CD14-positive monocyte (primary cell): ENCODE measurements at regions of chr6 and their contacts with region 1.

Region 1: GRCh38 chr6:6811151-6812002 is 222.9 kb downstream of the LY86 start:
- DNase-seq: peak; percentile 41 to 63 (median 61)
- H3K4me3 ChIP-seq: peak overlapping the region; percentile 50 to 82 (median 75)
- H3K4me3 Mint-ChIP-seq: peak overlapping the region; percentile 83 to 94
- H3K27ac ChIP-seq: peak overlapping the region; percentile 53 to 91
- H3K27ac Mint-ChIP-seq: peak overlapping the region; percentile 91 to 98 (median 93)
- H3K4me1 ChIP-seq: peaks cover 62 to 75% of the 10 kb centered on the region in 2 donors
- H3K4me1 Mint-ChIP-seq: peaks cover 75% of the 10 kb centered on the region
- H3K27me3 ChIP-seq: no peaks in the 10 kb centered on the region
- H3K27me3 Mint-ChIP-seq: peaks cover 0 to 2% (median 1%) of the 10 kb centered on the region in 3 donors
- CTCF ChIP-seq: no peak

Region 2: DNA sequence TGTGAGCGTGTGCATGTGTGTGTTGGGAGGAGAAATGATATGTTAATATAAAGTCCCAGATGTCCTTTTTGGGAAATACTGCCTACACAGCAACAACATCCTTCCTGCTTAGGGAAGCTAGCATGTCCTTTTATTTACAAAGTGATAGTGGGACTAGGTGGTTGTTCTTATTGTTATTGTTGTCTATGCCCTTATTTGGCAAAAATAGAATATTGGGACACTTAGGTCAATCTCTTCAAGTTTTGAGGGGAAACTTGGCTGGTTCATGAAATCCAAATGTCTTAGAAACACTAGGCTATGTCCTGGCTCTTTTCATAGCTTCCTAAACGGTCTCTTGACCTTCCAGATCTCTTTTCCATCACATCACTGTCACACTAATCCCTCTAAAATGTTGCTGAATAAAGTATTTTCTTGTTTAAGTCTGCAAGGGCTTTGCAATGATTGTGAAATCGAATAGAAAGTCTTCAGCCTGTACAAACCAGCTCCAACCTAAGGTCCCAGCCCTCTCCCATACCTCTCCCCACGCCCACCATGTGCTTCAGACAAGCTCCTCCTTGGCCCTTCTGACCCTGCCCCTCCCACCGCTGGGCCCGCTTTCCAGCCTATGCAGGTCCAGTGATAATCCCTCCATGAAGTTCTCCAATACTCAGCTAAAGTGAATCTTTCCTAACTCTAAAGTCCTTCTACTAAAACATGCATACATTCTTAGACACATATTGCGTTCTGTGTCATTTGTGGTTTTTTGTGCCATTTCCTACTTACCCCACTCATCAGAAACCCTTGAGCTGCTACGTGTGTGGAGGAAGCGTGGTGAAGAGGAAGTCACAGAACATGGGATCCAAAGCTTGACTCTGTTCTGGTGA is 17.8 kb before region 1 on chr6:
- intact Hi-C with region 1: loop called in 1 of 2 experiments (anchors 2 kb)
- DNase-seq: peak; percentile 79 to 93 (median 90)
- H3K4me3 ChIP-seq: peak overlapping the region in 1 of 3 experiments; percentile 29
- H3K4me3 Mint-ChIP-seq: peak overlapping the region; percentile 53 to 74
- H3K27ac ChIP-seq: peak overlapping the region; percentile 50 to 75
- H3K27ac Mint-ChIP-seq: peak overlapping the region; percentile 84 to 99 (median 96)
- H3K4me1 ChIP-seq: peaks cover 60% of the 10 kb centered on the region in 2 donors
- H3K4me1 Mint-ChIP-seq: peaks cover 62% of the 10 kb centered on the region
- H3K27me3 ChIP-seq: no peaks in the 10 kb centered on the region
- H3K27me3 Mint-ChIP-seq: peaks cover 0 to 5% (median 3%) of the 10 kb centered on the region in 3 donors
- CTCF ChIP-seq: no peak

Region 3: DNA sequence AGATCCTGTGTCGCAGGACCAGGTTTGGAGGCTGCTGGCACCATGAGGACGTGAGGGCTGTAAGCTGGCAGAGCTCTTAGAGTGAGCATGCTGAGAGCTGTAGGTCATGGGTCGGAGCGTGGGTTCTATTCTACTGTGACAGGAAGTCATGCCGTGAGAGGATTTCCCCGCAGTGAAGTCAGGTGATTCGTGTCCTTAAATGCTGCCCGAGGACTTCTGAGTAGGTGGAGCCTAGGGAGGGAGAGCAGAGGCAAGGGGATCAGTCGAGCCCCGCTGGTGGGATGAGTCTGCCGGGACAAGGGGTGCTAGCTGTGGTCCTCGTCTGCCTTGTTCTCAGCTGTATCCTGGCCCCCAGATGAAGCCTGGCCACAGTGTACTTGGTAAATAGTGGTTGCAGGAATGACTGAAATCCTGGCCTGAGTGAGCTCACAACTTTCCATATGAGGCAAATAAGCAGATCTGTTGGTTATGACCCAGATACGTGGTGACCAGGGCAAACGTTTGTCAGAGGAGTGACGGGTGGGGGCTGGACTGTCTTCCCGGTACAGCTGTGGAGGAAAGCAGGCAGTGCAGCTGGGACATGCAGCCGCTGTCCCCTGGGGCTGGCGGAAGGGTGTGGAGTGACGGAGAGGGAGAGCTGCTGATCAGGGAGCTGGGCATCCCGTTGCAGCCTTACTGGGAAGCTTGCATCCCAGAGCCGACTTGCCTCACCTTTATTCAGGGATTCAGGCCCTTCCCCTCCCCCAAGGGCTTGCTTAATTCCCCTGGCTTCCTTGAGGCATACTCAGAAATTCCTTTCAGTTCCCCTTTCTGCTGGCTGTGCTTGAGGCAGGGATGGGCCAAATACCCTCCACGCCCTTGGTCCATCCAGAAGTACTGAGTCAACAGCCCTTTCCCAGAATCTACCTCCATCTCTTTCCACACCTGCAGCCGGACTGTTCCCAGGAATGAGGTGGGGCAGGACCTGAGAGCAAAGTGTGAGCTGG is 45.5 kb after region 1 on chr6:
- intact Hi-C with region 1: loop called (anchors 5 kb)
- DNase-seq: peak; percentile 75 to 92 (median 86)
- H3K4me3 ChIP-seq: peak overlapping the region in 2 of 3 experiments; percentile 8 to 58
- H3K4me3 Mint-ChIP-seq: peak overlapping the region; percentile 40 to 72
- H3K27ac ChIP-seq: peak overlapping the region; percentile 67 to 93
- H3K27ac Mint-ChIP-seq: peak overlapping the region; percentile 93 to 98 (median 97)
- H3K4me1 ChIP-seq: peaks cover 42 to 45% of the 10 kb centered on the region in 2 donors
- H3K4me1 Mint-ChIP-seq: peaks cover 59% of the 10 kb centered on the region
- H3K27me3 ChIP-seq: no peaks in the 10 kb centered on the region
- H3K27me3 Mint-ChIP-seq: peaks cover 1 to 2% (median 2%) of the 10 kb centered on the region in 3 donors
- CTCF ChIP-seq: no peak

Region 4: GRCh38 chr6:6890400-6890858 is 79.1 kb after region 1 on chr6:
- intact Hi-C with region 1: loop called in 1 of 2 experiments (anchors 10 kb)
- DNase-seq: peak in 2 of 3 donors; percentile 45 to 66
- H3K4me3 ChIP-seq: peak overlapping the region in 1 of 3 experiments; percentile 57
- H3K4me3 Mint-ChIP-seq: peak overlapping the region; percentile 56 to 81
- H3K27ac ChIP-seq: peak overlapping the region; percentile 65 to 81
- H3K27ac Mint-ChIP-seq: peak overlapping the region; percentile 85 to 97 (median 92)
- H3K4me1 ChIP-seq: peaks cover 66 to 78% of the 10 kb centered on the region in 2 donors
- H3K4me1 Mint-ChIP-seq: peaks cover 69% of the 10 kb centered on the region
- H3K27me3 ChIP-seq: no peaks in the 10 kb centered on the region
- H3K27me3 Mint-ChIP-seq: peaks cover 0 to 1% (median 0%) of the 10 kb centered on the region in 3 donors
- CTCF ChIP-seq: no peak